CD8-positive, alpha-beta memory T cell (primary cell): ENCODE measurements at regions of chr3 and their contacts with region 1.

Region 1: GRCh38 chr3:27712136-27713077 is 9.7 kb downstream of the EOMES start:
- DNase-seq: peak; percentile 71 to 88 (median 75)
- H3K4me3 ChIP-seq: peak overlapping the region; percentile 84
- H3K4me3 Mint-ChIP-seq: peak overlapping the region; percentile 95 to 100 (median 99)
- H3K27ac ChIP-seq: peak overlapping the region; percentile 72
- H3K27ac Mint-ChIP-seq: peak overlapping the region; percentile 85 to 99 (median 96)
- H3K4me1 ChIP-seq: peaks cover 17% of the 10 kb centered on the region
- H3K4me1 Mint-ChIP-seq: peaks cover 30 to 49% (median 37%) of the 10 kb centered on the region in 3 donors
- H3K27me3 ChIP-seq: no peaks in the 10 kb centered on the region
- H3K27me3 Mint-ChIP-seq: peaks cover 5 to 10% of the 10 kb centered on the region in 2 donors

Region 2: GRCh38 chr3:27521179-27521871 is 191.1 kb before region 1 on chr3:
- CTCF ChIA-PET with region 1: no interaction called
- POLR2A ChIA-PET with region 1: no interaction called
- DNase-seq: no peak
- H3K4me3 ChIP-seq: no peak overlapping the region
- H3K4me3 Mint-ChIP-seq: no peak overlapping the region
- H3K27ac ChIP-seq: no peak overlapping the region
- H3K27ac Mint-ChIP-seq: no peak overlapping the region
- H3K4me1 ChIP-seq: no peaks in the 10 kb centered on the region
- H3K4me1 Mint-ChIP-seq: no peaks in the 10 kb centered on the region
- H3K27me3 ChIP-seq: no peaks in the 10 kb centered on the region
- H3K27me3 Mint-ChIP-seq: no peaks in the 10 kb centered on the region

Region 3: DNA sequence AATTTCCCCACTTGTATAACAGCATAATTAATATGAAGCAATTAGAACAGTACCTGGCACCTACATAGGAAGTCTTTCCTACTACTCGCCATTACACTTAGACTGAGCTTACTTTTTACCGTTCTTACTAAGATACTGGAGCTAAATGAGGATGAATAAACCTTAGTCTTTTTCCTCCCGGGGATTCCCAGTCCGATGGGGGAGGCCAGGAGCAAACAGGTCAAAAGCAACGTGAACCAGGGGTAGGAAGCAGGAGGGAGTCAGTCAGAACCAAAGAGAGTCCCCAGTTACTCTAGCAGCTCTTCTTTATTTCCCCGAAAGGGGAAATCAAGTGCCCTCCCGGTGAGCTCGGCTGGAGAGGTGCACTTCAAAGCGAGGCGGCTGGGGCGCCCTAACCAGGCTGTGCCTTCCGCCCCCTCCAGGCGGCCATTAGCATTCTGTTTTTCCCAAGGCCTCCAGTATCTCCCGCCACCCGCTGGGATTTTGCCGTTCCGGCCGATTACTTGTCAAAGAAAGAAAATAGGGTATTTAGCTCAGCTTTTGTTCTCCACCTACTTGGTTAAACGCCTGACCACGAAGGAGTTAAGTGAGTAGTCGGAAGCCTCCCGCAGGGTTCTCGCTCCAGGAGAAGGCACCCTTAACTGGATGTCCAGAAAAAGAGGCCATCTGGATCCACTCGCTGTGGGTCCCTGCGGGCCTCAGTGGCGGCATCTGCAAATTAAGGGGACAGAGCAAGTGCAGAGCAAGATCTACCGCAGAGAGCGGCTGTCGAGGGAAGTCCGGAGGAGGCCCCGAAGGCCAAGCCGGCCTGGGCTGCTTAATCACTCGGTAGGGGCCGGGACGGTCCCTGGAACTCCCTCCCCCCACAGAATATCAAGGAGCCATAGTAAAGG is 16.0 kb after region 1 on chr3:
- CTCF ChIA-PET with region 1: interaction called, 85 read pairs
- POLR2A ChIA-PET with region 1: interaction called, 52 read pairs
- DNase-seq: no peak
- H3K4me3 ChIP-seq: no peak overlapping the region
- H3K4me3 Mint-ChIP-seq: peak overlapping the region; percentile 76 to 87 (median 79)
- H3K27ac ChIP-seq: no peak overlapping the region
- H3K27ac Mint-ChIP-seq: peak overlapping the region in 2 of 8 donors; percentile 30 to 40
- H3K4me1 ChIP-seq: peaks cover 34% of the 10 kb centered on the region
- H3K4me1 Mint-ChIP-seq: peaks cover 43 to 52% (median 48%) of the 10 kb centered on the region in 3 donors
- H3K27me3 ChIP-seq: peaks cover 55% of the 10 kb centered on the region
- H3K27me3 Mint-ChIP-seq: peaks cover 55 to 76% of the 10 kb centered on the region in 2 donors

Region 4: DNA sequence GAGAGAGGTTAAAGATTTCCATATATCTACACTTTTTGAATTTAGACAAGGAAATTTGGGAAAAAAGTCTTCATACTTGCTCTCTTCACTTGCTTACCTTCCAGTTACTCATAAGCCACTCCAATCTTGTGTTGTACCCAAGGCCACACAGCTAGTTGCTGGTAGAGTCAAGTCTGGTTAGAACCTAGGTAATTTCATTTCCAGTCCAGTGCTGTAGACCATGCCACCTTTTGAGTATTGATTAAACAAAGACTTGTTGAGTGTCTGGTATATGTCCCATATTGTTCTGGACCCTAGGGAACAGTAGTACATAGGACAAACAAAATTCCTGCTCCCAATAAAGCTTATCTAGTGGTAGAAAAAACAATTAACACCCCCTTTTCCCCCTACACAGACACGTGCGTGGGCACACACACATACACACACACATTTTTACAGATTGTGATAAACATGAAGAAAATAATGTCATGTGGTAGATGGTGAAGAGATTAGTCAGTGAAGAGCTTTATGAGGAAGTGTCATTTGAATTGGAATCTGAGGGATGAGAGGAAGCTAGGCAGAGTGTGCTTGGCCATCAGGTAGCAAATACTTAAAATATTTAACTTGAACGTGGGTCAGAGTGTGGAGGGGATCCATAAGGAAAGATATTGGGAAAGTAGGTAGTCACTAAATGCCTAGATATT is 531.2 kb after region 1 on chr3:
- CTCF ChIA-PET with region 1: interaction called, 12 read pairs
- POLR2A ChIA-PET with region 1: interaction called, 8 read pairs
- DNase-seq: peak in 3 of 5 donors; percentile 10 to 65 (median 57)
- H3K4me3 ChIP-seq: peak overlapping the region; percentile 13
- H3K4me3 Mint-ChIP-seq: peak overlapping the region; percentile 53 to 98 (median 93)
- H3K27ac ChIP-seq: no peak overlapping the region
- H3K27ac Mint-ChIP-seq: peak overlapping the region; percentile 49 to 91 (median 67)
- H3K4me1 ChIP-seq: peaks cover 72% of the 10 kb centered on the region
- H3K4me1 Mint-ChIP-seq: peaks cover 74 to 91% (median 84%) of the 10 kb centered on the region in 3 donors
- H3K27me3 ChIP-seq: no peaks in the 10 kb centered on the region
- H3K27me3 Mint-ChIP-seq: no peaks in the 10 kb centered on the region

Region 5: GRCh38 chr3:28295898-28296490 is 583.6 kb after region 1 on chr3:
- CTCF ChIA-PET with region 1: interaction called, 16 read pairs
- POLR2A ChIA-PET with region 1: interaction called, 6 read pairs
- DNase-seq: no peak
- H3K4me3 ChIP-seq: no peak overlapping the region
- H3K4me3 Mint-ChIP-seq: peak overlapping the region; percentile 67 to 88 (median 79)
- H3K27ac ChIP-seq: no peak overlapping the region
- H3K27ac Mint-ChIP-seq: peak overlapping the region in 7 of 8 donors; percentile 19 to 91 (median 80)
- H3K4me1 ChIP-seq: peaks cover 3% of the 10 kb centered on the region
- H3K4me1 Mint-ChIP-seq: peaks cover 51 to 75% (median 73%) of the 10 kb centered on the region in 3 donors
- H3K27me3 ChIP-seq: no peaks in the 10 kb centered on the region
- H3K27me3 Mint-ChIP-seq: no peaks in the 10 kb centered on the region

Region 6: DNA sequence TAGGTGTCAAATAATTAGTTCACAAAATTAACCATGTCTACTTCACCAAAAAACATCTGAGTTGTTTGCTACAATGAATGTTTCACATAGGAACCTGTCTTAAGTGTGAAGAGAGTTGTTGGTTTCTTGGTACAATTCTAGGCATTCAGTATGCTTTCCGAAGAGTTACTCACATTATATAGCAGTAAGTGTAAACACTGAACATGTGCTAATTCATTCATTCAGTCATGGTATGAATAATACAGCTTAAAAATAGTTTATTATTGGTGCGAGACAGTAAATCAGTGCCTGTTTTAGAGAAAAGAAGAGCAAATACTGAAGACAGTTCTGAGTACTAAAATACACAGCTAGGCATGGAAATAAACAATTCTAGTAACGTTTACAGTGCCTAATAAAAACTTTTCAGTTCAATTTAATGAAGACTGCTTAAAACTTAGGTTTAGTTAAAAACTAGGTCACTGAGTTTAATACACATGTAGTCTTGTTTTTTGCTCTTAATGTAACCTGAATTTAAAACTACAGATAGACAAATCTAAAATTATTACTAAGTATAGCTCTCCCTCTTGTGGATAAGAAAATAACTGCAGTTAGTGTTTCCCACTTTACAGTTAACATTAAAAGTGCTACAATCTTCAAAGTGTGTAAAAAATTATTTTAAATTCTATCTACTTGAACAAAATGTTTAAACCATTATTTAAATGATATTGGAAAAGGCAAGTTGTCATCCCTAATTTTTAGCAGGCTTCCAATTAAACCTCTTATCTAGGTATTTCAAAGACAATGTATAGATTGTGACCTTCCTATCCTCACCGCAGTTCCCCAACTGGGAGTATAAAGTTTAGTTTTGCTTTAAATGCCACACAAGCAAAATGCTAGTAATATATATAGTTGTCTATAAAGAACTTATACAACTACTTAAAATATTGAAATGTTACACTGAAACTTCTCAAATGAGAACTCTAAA is 616.1 kb after region 1 on chr3:
- CTCF ChIA-PET with region 1: interaction called, 130 read pairs
- POLR2A ChIA-PET with region 1: interaction called, 21 read pairs
- DNase-seq: peak in 2 of 5 donors; percentile 41 to 49
- H3K4me3 ChIP-seq: no peak overlapping the region
- H3K4me3 Mint-ChIP-seq: peak overlapping the region in 4 of 7 donors; percentile 19 to 54 (median 40)
- H3K27ac ChIP-seq: no peak overlapping the region
- H3K27ac Mint-ChIP-seq: peak overlapping the region in 4 of 8 donors; percentile 35 to 81 (median 52)
- H3K4me1 ChIP-seq: peaks cover 24% of the 10 kb centered on the region
- H3K4me1 Mint-ChIP-seq: peaks cover 41 to 58% (median 57%) of the 10 kb centered on the region in 3 donors
- H3K27me3 ChIP-seq: no peaks in the 10 kb centered on the region
- H3K27me3 Mint-ChIP-seq: no peaks in the 10 kb centered on the region